CD4-positive, alpha-beta memory T cell (primary cell): ENCODE measurements at regions of chr19 and their contacts with region 1.

Region 1: GRCh38 chr19:13784731-13785452 is 10.4 kb upstream of the ZSWIM4 start:
- DNase-seq: peak; percentile 63 to 71 (median 66)
- H3K4me3 ChIP-seq: no peak overlapping the region
- H3K4me3 Mint-ChIP-seq: peak overlapping the region in 7 of 8 donors; percentile 21 to 70 (median 64)
- H3K27ac ChIP-seq: no peak overlapping the region
- H3K27ac Mint-ChIP-seq: peak overlapping the region; percentile 12 to 91 (median 80)
- H3K4me1 ChIP-seq: peaks cover 42% of the 10 kb centered on the region
- H3K4me1 Mint-ChIP-seq: peaks cover 12 to 37% (median 24%) of the 10 kb centered on the region in 4 donors
- H3K27me3 ChIP-seq: no peaks in the 10 kb centered on the region
- H3K27me3 Mint-ChIP-seq: no peaks in the 10 kb centered on the region

Region 2: DNA sequence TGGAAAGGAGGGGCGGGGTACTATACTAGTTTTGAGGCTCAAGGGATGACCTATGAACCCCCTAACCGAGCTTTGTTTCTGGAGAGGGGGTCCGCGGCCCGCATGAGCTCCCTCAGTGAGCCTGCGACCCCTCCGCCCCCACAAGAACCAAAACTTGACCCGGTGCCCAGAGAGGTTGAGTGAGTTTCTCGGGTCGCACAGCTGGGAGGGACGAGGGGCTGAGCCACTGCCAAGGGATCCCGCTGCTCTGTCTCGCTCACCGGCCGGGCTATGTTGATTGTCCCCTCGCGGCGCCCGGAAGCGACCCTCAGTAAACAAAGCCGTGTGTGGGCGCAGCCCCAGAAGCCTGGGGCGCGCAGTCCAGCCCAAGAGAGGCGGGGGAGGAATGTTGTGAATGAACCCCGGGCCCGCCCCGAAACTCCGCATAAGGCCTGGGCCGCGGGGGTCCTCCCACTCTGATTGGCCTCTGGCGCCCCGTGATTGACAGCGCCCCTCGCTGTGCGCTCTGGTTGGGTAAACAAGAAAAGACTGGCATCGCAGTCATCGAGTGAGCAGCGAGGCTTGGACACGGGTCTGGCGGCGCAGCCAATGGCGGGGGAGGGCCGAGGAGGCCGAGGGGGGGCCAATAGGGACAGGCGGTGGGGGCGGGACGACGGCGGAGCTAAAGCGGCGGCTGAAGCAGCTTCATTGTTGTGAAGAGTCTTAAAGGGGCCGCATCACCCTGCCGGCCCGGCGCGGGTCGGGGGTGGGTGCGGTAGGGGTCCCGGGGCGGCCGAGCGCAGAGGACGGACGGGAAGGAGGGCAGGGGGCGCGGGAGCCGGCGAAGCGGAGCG is 10.1 kb after region 1 on chr19 and contains the start of gene ZSWIM4:
- CTCF ChIA-PET with region 1: interaction called, 6 read pairs
- POLR2A ChIA-PET with region 1: interaction called, 23 read pairs
- intact Hi-C with region 1: loop called (anchors 1 kb)
- DNase-seq: peak; percentile 81 to 85 (median 82)
- H3K4me3 ChIP-seq: peak within 1 kb of the TSS; percentile 61 to 66
- H3K4me3 Mint-ChIP-seq: peak within 1 kb of the TSS; percentile 91 to 97 (median 96)
- H3K27ac ChIP-seq: peak within 1 kb of the TSS; percentile 53
- H3K27ac Mint-ChIP-seq: peak within 1 kb of the TSS; percentile 92 to 98 (median 95)
- H3K4me1 ChIP-seq: peaks cover 23% of the 10 kb centered on the region
- H3K4me1 Mint-ChIP-seq: peaks cover 21 to 39% (median 31%) of the 10 kb centered on the region in 4 donors
- H3K27me3 ChIP-seq: no peaks in the 10 kb centered on the region
- H3K27me3 Mint-ChIP-seq: no peaks in the 10 kb centered on the region
- total RNA-seq, gene ZSWIM4: 6.4 to 6.6 TPM

Region 3: DNA sequence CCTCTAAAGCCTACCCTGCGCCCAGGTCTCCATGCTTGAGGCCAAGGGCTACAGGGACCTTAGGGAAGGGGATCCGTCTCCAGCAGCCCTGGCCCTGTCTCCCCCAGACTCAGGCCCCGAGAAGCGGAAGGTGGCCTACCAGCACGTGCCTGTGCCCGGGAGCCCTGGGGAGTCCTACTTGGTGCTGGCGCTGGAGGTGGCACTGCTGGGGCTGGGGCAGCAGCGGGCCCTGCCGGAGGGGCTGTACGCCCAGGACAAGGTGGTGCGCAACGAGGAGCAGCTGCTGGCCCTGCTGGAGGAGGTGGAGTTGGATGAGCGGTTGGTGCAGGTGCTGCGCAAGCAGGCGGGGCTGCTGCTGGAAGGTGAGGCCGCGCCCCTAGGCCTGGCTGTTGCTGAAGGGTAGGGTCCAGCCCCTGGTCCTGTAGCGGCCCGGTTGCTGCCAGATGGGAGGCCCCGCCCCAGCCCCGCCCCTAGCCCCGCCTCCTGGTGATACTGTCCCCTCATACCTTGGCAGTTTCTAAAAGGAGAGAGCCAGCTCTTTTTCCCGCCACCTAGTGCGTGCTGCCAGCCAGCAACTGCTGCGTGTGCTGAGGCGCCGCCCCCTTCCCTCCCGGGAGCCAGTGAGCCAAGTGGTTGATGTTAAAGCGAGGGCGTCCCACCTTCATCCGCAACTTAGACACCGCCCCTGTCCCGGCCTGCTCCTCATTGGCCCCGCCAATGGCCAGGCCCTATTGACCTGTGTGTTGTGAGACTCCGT is 32.9 kb after region 1 on chr19:
- CTCF ChIA-PET with region 1: interaction called, 3 read pairs
- POLR2A ChIA-PET with region 1: interaction called, 11 read pairs
- intact Hi-C with region 1: no loop called
- DNase-seq: peak in 1 of 5 donors; percentile 52
- H3K4me3 ChIP-seq: no peak overlapping the region
- H3K4me3 Mint-ChIP-seq: peak overlapping the region in 1 of 8 donors; percentile 46
- H3K27ac ChIP-seq: no peak overlapping the region
- H3K27ac Mint-ChIP-seq: peak overlapping the region in 2 of 7 donors; percentile 17 to 60
- H3K4me1 ChIP-seq: no peaks in the 10 kb centered on the region
- H3K4me1 Mint-ChIP-seq: peaks cover 0 to 15% (median 0%) of the 10 kb centered on the region in 4 donors
- H3K27me3 ChIP-seq: no peaks in the 10 kb centered on the region
- H3K27me3 Mint-ChIP-seq: no peaks in the 10 kb centered on the region

Region 4: GRCh38 chr19:13833330-13834243 is 48.7 kb after region 1 on chr19:
- CTCF ChIA-PET with region 1: interaction called, 37 read pairs
- POLR2A ChIA-PET with region 1: interaction called, 61 read pairs
- intact Hi-C with region 1: no loop called
- DNase-seq: peak; percentile 90 to 94 (median 91)
- H3K4me3 ChIP-seq: peak overlapping the region; percentile 36 to 47
- H3K4me3 Mint-ChIP-seq: peak overlapping the region; percentile 83 to 88 (median 86)
- H3K27ac ChIP-seq: peak overlapping the region; percentile 92
- H3K27ac Mint-ChIP-seq: peak overlapping the region; percentile 96 to 100 (median 97)
- H3K4me1 ChIP-seq: peaks cover 49% of the 10 kb centered on the region
- H3K4me1 Mint-ChIP-seq: peaks cover 17 to 50% (median 30%) of the 10 kb centered on the region in 4 donors
- H3K27me3 ChIP-seq: no peaks in the 10 kb centered on the region
- H3K27me3 Mint-ChIP-seq: no peaks in the 10 kb centered on the region

Region 5: GRCh38 chr19:13839130-13839937 is 54.4 kb after region 1 on chr19:
- CTCF ChIA-PET with region 1: interaction called, 37 read pairs
- POLR2A ChIA-PET with region 1: interaction called, 65 read pairs
- intact Hi-C with region 1: no loop called
- DNase-seq: peak; percentile 75 to 96 (median 79)
- H3K4me3 ChIP-seq: peak overlapping the region; percentile 63 to 86
- H3K4me3 Mint-ChIP-seq: peak overlapping the region; percentile 84 to 97 (median 95)
- H3K27ac ChIP-seq: peak overlapping the region; percentile 98
- H3K27ac Mint-ChIP-seq: peak overlapping the region; percentile 99 to 100 (median 99)
- H3K4me1 ChIP-seq: peaks cover 78% of the 10 kb centered on the region
- H3K4me1 Mint-ChIP-seq: peaks cover 25 to 87% (median 46%) of the 10 kb centered on the region in 4 donors
- H3K27me3 ChIP-seq: no peaks in the 10 kb centered on the region
- H3K27me3 Mint-ChIP-seq: no peaks in the 10 kb centered on the region

Region 6: GRCh38 chr19:13846557-13847406 is 61.9 kb after region 1 on chr19:
- CTCF ChIA-PET with region 1: interaction called, 19 read pairs
- POLR2A ChIA-PET with region 1: interaction called, 117 read pairs
- intact Hi-C with region 1: no loop called
- DNase-seq: peak; percentile 99
- H3K4me3 ChIP-seq: peak overlapping the region; percentile 50 to 79
- H3K4me3 Mint-ChIP-seq: peak overlapping the region; percentile 83 to 98 (median 90)
- H3K27ac ChIP-seq: peak overlapping the region; percentile 99
- H3K27ac Mint-ChIP-seq: peak overlapping the region; percentile 99 to 100 (median 100)
- H3K4me1 ChIP-seq: peaks cover 69% of the 10 kb centered on the region
- H3K4me1 Mint-ChIP-seq: peaks cover 33 to 77% (median 50%) of the 10 kb centered on the region in 4 donors
- H3K27me3 ChIP-seq: no peaks in the 10 kb centered on the region
- H3K27me3 Mint-ChIP-seq: peaks cover 0 to 4% of the 10 kb centered on the region in 2 donors